IMR-90 (cell line): ENCODE measurements at regions of chr3 and their contacts with region 1.

Region 1: DNA sequence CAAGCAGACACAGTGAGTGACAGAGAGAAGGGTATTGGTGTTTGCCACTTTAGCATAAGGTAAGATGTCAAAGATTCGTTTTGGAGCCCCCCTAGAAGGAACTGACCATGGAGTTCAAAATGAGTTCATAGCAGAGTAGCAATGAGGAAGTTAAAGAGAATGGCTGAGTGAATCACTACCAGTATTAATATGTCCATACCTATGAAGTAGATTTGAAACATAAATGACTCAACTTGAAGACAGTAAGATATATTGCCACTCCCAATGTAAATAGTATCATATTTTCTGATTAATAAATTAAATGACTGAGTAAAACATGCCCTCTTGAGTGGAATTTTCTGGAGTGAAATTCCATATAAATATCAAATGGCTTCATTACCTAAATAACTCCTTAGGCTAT is 675.1 kb downstream of the NLGN1 start:
- DNase-seq: no peak
- ATAC-seq: no peak
- H3K4me3 ChIP-seq: no peak overlapping the region
- H3K27ac ChIP-seq: no peak overlapping the region
- H3K4me1 ChIP-seq: no peaks in the 10 kb centered on the region
- H3K27me3 ChIP-seq: no peaks in the 10 kb centered on the region
- CTCF ChIP-seq: no peak
- POLR2A ChIP-seq: no peak
- RAD21 ChIP-seq: no peak

Region 2: DNA sequence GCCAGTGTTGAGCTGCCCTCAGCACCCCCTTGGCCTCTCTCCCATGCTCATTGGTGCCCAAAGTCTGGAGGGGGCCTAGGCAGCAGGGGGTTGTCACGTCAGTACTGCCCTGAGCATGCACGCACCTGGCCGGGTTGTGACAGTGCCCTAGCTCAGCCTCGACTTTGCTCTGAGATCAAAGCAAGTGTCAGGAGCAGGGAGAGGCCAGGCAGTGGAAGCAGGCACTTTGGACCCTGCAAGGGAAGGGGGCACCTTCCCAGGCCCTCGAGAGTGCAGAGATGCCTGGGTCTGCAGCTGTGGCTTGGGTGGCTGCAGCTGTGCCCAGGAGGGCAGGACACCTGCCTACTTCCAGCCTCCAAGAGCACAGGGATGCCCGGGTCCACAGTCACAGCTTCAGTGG is 113.9 kb before region 1 on chr3:
- CTCF ChIA-PET with region 1: interaction called, 12 read pairs
- POLR2A ChIA-PET with region 1: no interaction called
- dilution Hi-C with region 1: no loop called
- in situ Hi-C with region 1: no loop called
- intact Hi-C with region 1: no loop called
- DNase-seq: no peak
- ATAC-seq: no peak
- H3K4me3 ChIP-seq: no peak overlapping the region
- H3K27ac ChIP-seq: no peak overlapping the region
- H3K4me1 ChIP-seq: no peaks in the 10 kb centered on the region
- H3K27me3 ChIP-seq: no peaks in the 10 kb centered on the region
- CTCF ChIP-seq: no peak
- POLR2A ChIP-seq: no peak
- RAD21 ChIP-seq: no peak

Region 3: DNA sequence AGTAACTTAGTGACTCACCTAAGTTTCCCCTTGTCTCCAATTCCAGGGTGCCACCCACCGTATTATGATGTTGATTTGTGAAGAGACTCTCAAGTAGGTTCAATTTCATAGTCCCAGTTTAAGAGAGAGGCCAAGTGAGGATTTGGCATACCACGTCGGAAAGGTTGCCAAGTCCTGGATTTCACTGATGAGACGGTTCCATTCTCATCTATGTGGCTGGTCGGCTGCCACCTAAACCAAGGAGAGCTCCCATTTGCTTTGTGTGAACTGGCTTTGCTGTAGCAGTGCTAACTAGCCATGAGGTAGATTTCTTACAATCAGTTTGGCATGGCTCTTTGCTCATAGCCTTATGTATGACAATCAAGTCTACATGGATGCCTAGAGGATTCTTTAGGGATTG is 21.5 kb before region 1 on chr3:
- CTCF ChIA-PET with region 1: no interaction called
- POLR2A ChIA-PET with region 1: interaction called, 14 read pairs
- dilution Hi-C with region 1: no loop called
- in situ Hi-C with region 1: no loop called
- intact Hi-C with region 1: no loop called
- DNase-seq: no peak
- ATAC-seq: no peak
- H3K4me3 ChIP-seq: no peak overlapping the region
- H3K27ac ChIP-seq: no peak overlapping the region
- H3K4me1 ChIP-seq: no peaks in the 10 kb centered on the region
- H3K27me3 ChIP-seq: no peaks in the 10 kb centered on the region
- CTCF ChIP-seq: no peak
- POLR2A ChIP-seq: no peak
- RAD21 ChIP-seq: no peak